CD8-positive, alpha-beta T cell (primary cell): ENCODE measurements at regions of chr1 and their contacts with region 1.

Region 1: GRCh38 chr1:204377795-204378608 is 18.3 kb upstream of the PLEKHA6 start:
- DNase-seq: peak in 8 of 9 experiments; percentile 35 to 76 (median 54)
- ATAC-seq: peak; percentile 60
- H3K4me3 ChIP-seq: peak overlapping the region; percentile 54 to 70
- H3K4me3 Mint-ChIP-seq: peak overlapping the region; percentile 91
- H3K27ac ChIP-seq: no peak overlapping the region
- H3K27ac Mint-ChIP-seq: no peak overlapping the region
- H3K4me1 ChIP-seq: peaks cover 13% of the 10 kb centered on the region
- H3K4me1 Mint-ChIP-seq: peaks cover 13% of the 10 kb centered on the region
- H3K27me3 ChIP-seq: peaks cover 5 to 14% of the 10 kb centered on the region in 2 experiments
- H3K27me3 Mint-ChIP-seq: peaks cover 11% of the 10 kb centered on the region
- CTCF ChIP-seq: no peak

Region 2: GRCh38 chr1:204278254-204278653 is 99.7 kb before region 1 on chr1:
- CTCF ChIA-PET with region 1: no interaction called
- POLR2A ChIA-PET with region 1: no interaction called
- intact Hi-C with region 1: no loop called
- DNase-seq: peak in 1 of 9 experiments; percentile 19
- ATAC-seq: no peak
- H3K4me3 ChIP-seq: no peak overlapping the region
- H3K4me3 Mint-ChIP-seq: no peak overlapping the region
- H3K27ac ChIP-seq: no peak overlapping the region
- H3K27ac Mint-ChIP-seq: no peak overlapping the region
- H3K4me1 ChIP-seq: no peaks in the 10 kb centered on the region
- H3K4me1 Mint-ChIP-seq: no peaks in the 10 kb centered on the region
- H3K27me3 ChIP-seq: no peaks in the 10 kb centered on the region
- H3K27me3 Mint-ChIP-seq: peaks cover 15% of the 10 kb centered on the region
- CTCF ChIP-seq: no peak

Region 3: DNA sequence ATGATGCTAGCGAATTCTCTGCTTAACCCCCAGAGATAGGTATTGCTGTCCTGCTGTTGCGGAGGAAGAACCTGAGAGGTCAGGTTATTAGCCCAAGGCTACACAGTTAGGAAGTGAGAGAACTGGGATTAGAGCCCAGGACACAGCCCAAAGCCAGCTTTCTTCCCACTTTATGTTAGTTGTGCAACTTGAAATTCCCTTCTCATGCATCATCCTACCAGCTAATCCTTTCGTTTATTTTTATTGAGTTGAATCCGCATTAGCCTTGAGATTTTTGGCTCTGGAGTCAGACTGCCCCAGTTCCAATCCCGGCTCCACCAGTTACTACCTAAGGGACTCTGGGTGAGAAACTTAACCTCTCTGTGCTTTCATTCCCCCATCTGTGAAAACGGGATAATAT is 83.6 kb before region 1 on chr1:
- CTCF ChIA-PET with region 1: no interaction called
- POLR2A ChIA-PET with region 1: no interaction called
- intact Hi-C with region 1: loop called in 1 of 2 experiments (anchors 5 kb)
- DNase-seq: no peak
- ATAC-seq: no peak
- H3K4me3 ChIP-seq: no peak overlapping the region
- H3K4me3 Mint-ChIP-seq: no peak overlapping the region
- H3K27ac ChIP-seq: no peak overlapping the region
- H3K27ac Mint-ChIP-seq: no peak overlapping the region
- H3K4me1 ChIP-seq: peaks cover 10% of the 10 kb centered on the region
- H3K4me1 Mint-ChIP-seq: peaks cover 17% of the 10 kb centered on the region
- H3K27me3 ChIP-seq: no peaks in the 10 kb centered on the region
- H3K27me3 Mint-ChIP-seq: peaks cover 11% of the 10 kb centered on the region
- CTCF ChIP-seq: no peak

Region 4: GRCh38 chr1:204879351-204879750 is 501.3 kb after region 1 on chr1:
- CTCF ChIA-PET with region 1: no interaction called
- POLR2A ChIA-PET with region 1: no interaction called
- intact Hi-C with region 1: no loop called
- DNase-seq: no peak
- ATAC-seq: no peak
- H3K4me3 ChIP-seq: no peak overlapping the region
- H3K4me3 Mint-ChIP-seq: no peak overlapping the region
- H3K27ac ChIP-seq: no peak overlapping the region
- H3K27ac Mint-ChIP-seq: no peak overlapping the region
- H3K4me1 ChIP-seq: no peaks in the 10 kb centered on the region
- H3K4me1 Mint-ChIP-seq: no peaks in the 10 kb centered on the region
- H3K27me3 ChIP-seq: no peaks in the 10 kb centered on the region
- H3K27me3 Mint-ChIP-seq: peaks cover 29% of the 10 kb centered on the region
- CTCF ChIP-seq: no peak